Activated T-helper 2 cell treated with anti-CD3 and anti-CD28 coated beads, Interferon-gamma antibody, Interleukin-2, Interleukin-4, amounts not matched to agents 10 μg/mL and 5 μg/mL and 100 μg/mL, durations not matched to agents 14 hours and 24 hours and 36 hours (primary cell): ENCODE measurements at regions of chr1 and their contacts with region 1.

Region 1: GRCh38 chr1:244970661-244971551 is 106.6 kb upstream of the HNRNPU start:
- DNase-seq: peak; percentile 88
- H3K4me3 Mint-ChIP-seq: peak overlapping the region; percentile 91
- H3K27ac Mint-ChIP-seq: peak overlapping the region; percentile 98
- H3K4me1 Mint-ChIP-seq: peaks cover 13% of the 10 kb centered on the region
- H3K27me3 Mint-ChIP-seq: peaks cover 4% of the 10 kb centered on the region

Region 2: DNA sequence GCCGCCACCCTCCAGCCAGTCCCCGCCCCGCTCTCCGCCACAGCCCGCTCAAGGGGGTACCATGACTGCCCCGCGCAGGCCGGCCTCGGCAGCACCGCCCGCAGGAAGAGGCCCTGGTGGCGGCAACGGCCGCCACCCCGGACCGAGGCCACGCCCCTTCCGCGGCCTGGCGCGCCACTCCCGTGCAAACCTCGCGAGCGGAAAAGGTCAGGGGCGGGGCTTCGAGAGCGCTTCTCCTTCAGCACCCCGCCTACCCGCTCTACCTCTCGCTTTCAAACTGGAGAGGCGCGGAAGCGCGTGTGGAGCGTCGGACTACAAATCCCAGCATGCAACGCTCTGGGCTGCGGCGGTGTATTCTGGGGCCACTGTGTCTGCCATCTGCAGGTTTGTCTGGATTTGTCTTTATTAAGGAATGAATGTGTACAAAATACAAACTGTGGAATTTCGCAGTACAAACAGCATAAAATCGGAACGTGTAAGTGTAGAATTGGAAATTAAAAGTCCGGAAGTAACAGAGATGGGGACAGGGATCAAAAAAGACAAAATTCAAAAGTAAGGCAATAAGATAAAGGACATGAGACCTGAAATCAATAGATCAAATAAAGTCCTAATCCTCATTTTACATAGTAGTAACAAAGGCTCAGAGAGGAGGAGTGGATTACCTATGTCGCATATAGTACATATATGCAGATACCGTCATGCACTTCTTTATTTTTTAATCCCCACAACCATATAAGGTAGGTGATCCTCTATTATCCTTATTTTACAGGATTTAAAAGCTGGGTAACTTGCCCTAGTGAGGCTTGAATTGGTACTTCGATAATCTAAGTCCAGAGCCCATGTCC is 518.7 kb before region 1 on chr1:
- intact Hi-C with region 1: loop called (anchors 2 kb)
- DNase-seq: peak; percentile 98
- H3K4me3 Mint-ChIP-seq: peak overlapping the region; percentile 95
- H3K27ac Mint-ChIP-seq: peak overlapping the region; percentile 96
- H3K4me1 Mint-ChIP-seq: peaks cover 34% of the 10 kb centered on the region
- H3K27me3 Mint-ChIP-seq: no peaks in the 10 kb centered on the region

Region 3: GRCh38 chr1:244652699-244653466 is 318.0 kb before region 1 on chr1 and contains the start of gene DESI2:
- intact Hi-C with region 1: loop called (anchors 1 kb)
- DNase-seq: peak; percentile 98
- H3K4me3 Mint-ChIP-seq: peak within 1 kb of the TSS; percentile 82
- H3K27ac Mint-ChIP-seq: peak within 1 kb of the TSS; percentile 71
- H3K4me1 Mint-ChIP-seq: peaks cover 20% of the 10 kb centered on the region
- H3K27me3 Mint-ChIP-seq: peaks cover 1% of the 10 kb centered on the region
- total RNA-seq, gene DESI2: 27.4 TPM in 2 replicates

Region 4: DNA sequence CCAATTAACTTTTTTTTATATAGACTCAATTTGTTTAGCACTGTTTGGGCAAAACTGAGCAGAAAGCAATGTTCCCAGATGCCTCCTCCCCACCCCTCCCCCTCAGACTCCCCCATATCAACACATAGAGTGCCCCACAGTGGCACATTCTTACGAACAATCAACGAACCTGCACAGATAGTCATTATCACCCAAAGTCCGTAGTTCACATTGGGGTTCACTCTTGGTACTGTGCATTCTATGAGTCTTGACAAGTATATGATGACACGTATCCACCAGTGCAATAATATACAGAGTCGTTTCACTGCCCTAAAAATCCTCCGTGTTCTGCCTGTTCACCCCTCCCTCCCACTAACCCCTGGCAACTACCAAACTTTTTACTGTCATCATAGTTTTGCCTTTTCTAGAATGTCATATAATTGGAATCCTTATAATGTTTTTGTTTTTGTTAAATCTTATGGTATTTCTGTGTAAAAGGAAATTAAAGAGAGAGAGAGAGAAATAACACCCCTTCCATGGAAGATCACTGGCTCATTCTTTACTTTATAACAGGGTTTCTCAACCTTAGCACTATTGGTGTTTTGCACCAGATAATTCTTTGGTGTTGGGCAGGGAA is 69.4 kb before region 1 on chr1:
- intact Hi-C with region 1: no loop called
- DNase-seq: no peak
- H3K4me3 Mint-ChIP-seq: no peak overlapping the region
- H3K27ac Mint-ChIP-seq: no peak overlapping the region
- H3K4me1 Mint-ChIP-seq: no peaks in the 10 kb centered on the region
- H3K27me3 Mint-ChIP-seq: no peaks in the 10 kb centered on the region

Region 5: GRCh38 chr1:244918421-244919319 is 52.2 kb before region 1 on chr1:
- intact Hi-C with region 1: loop called (anchors 2 kb)
- DNase-seq: peak; percentile 40
- H3K4me3 Mint-ChIP-seq: peak overlapping the region; percentile 82
- H3K27ac Mint-ChIP-seq: peak overlapping the region; percentile 62
- H3K4me1 Mint-ChIP-seq: peaks cover 14% of the 10 kb centered on the region
- H3K27me3 Mint-ChIP-seq: peaks cover 30% of the 10 kb centered on the region

Region 6: DNA sequence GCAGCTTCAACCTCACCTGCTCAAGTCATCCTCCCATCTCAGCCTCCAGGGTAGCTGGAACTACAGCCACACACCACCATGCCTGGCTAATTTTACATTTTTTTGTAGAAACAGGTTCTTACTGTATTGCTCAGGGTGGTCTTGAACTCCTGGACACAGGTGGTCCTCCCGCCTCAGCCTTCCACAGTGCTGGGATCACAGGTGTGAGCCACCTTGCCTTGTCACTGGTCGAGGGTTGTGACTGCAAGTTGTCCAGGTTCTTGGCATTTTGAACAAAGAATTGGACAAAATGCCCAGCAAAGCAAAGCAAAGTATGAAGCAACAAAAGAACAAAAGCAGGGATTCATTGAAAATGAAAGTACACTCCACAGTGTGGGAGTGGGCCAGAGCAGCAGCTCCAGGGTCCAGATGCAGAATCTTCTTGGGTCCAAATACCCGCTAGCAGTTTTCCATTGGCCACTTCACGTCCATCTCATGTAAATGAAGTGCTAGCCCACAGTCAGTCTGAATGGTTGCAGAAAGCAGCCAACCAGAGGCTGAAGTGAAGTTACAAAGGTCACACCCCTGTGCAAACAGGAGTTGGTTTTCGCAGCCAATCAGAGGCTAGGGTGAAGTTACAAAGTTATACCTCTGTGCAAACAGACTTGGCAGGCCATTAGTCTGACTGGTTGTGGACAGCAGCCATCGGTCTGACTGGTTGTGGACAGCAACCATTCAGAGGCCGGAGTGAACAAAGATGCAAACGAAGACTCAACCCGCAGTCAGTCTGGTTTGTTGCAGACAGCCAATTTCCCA is 74.4 kb after region 1 on chr1:
- intact Hi-C with region 1: loop called (anchors 2 kb)
- DNase-seq: no peak
- H3K4me3 Mint-ChIP-seq: no peak overlapping the region
- H3K27ac Mint-ChIP-seq: no peak overlapping the region
- H3K4me1 Mint-ChIP-seq: peaks cover 12% of the 10 kb centered on the region
- H3K27me3 Mint-ChIP-seq: no peaks in the 10 kb centered on the region